Activated CD8-positive, alpha-beta T cell treated with anti-CD3 and anti-CD28 coated beads, Interleukin-2, amount 10 ng/mL, durations not matched to agents 7 days and 5 days (primary cell): ENCODE measurements at regions of chr6 and their contacts with region 1.

Region 1: DNA sequence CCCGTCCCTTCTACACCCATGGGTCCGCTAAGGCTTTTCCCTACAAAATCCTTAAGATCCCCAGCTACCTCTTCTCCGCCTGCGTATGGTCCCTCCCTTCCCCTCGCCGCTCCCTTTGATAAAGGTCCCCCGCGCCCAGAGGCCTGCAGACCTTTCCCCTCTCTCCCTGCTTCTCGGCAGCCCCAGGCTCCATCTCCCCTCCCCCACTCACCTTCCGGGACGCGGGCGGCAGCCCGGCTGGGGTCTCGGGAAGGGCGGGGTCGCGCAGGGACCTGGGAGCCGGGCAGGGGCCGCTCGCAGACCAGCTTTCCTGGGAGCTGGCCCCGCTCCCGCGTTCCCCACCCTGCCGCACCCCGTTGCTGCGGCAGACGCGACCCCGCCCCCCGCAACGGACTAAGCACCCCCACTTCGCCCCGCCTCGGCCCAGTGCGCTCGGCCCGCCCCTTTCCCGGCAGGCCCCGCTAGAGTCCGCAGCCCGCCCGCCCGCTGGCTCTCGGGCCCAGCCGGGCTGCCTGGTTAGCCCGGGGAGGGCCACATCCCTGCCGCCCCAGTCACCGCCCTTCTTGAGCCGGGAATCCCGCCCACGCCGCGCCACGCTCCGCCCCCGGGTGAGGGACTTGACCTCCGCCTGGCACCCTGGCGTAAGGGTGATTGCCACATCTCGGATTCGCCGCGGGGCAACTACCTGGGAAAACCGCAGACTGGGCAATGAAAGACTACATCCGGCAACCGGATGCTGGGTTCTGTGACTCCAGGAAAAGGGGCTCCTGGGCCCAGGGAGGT is at the start of gene FLOT1:
- DNase-seq: peak; percentile 98
- ATAC-seq: peak; percentile 78
- H3K4me3 Mint-ChIP-seq: peak within 1 kb of the TSS; percentile 99
- H3K27ac Mint-ChIP-seq: peak within 1 kb of the TSS; percentile 96
- H3K4me1 Mint-ChIP-seq: peaks cover 69% of the 10 kb centered on the region
- H3K27me3 Mint-ChIP-seq: no peaks in the 10 kb centered on the region
- total RNA-seq, gene FLOT1: 314 to 317 TPM

Region 2: GRCh38 chr6:30717042-30717844 is 25.3 kb before region 1 on chr6 and contains the start of gene MDC1:
- CTCF ChIA-PET with region 1: interaction called, 32 read pairs
- POLR2A ChIA-PET with region 1: interaction called, 4 read pairs
- DNase-seq: peak; percentile 100
- ATAC-seq: peak; percentile 81
- H3K4me3 Mint-ChIP-seq: peak within 1 kb of the TSS; percentile 98
- H3K27ac Mint-ChIP-seq: peak within 1 kb of the TSS; percentile 100
- H3K4me1 Mint-ChIP-seq: peaks cover 64% of the 10 kb centered on the region
- H3K27me3 Mint-ChIP-seq: no peaks in the 10 kb centered on the region
- total RNA-seq, gene MDC1: 48.5 to 52.4 TPM

Region 3: GRCh38 chr6:30754631-30755030 is 12.1 kb after region 1 on chr6:
- CTCF ChIA-PET with region 1: interaction called, 12 read pairs
- POLR2A ChIA-PET with region 1: interaction called, 3 read pairs
- DNase-seq: no peak
- ATAC-seq: no peak
- H3K4me3 Mint-ChIP-seq: no peak overlapping the region
- H3K27ac Mint-ChIP-seq: no peak overlapping the region
- H3K4me1 Mint-ChIP-seq: peaks cover 28% of the 10 kb centered on the region
- H3K27me3 Mint-ChIP-seq: no peaks in the 10 kb centered on the region

Region 4: DNA sequence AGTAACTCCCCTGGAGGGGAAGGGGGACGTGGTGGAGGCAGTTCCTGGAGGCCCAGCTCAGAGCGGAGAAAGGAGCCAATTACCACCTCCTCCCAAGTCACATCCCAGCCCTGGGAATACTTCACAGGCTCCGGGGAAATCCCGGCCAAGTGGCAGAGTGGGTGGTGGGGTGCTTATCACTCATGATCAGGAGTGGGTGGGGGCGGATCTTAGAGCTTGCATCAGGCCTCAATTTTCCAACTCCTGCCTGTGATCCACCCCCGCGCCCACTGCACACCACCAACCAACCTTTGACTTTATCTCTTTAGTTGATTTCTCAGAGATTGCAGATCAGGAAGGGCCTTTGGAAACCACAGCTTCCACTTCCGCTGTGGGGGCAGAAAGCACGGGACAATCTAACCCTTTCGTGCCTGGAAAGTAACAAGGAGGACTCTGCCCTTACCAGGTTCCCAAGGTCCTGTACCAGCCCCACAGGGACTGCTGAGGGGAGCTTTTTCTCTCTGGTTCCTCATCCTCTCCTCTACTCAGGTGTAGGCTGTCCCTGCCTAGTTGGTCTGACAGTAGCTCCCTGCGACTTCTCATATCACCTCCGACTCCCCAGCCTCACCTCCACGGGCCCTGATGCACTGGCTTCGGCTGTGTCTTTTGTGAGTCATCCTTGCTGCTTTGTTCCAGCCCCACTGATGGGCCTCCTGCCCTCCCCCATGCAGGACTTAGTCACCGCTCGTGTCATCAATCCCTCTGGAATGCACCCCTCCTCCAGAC is 26.8 kb after region 1 on chr6:
- CTCF ChIA-PET with region 1: interaction called, 8 read pairs
- POLR2A ChIA-PET with region 1: interaction called, 40 read pairs
- DNase-seq: peak; percentile 86
- ATAC-seq: peak; percentile 84
- H3K4me3 Mint-ChIP-seq: peak overlapping the region; percentile 56
- H3K27ac Mint-ChIP-seq: peak overlapping the region; percentile 88
- H3K4me1 Mint-ChIP-seq: peaks cover 88% of the 10 kb centered on the region
- H3K27me3 Mint-ChIP-seq: no peaks in the 10 kb centered on the region

Region 5: DNA sequence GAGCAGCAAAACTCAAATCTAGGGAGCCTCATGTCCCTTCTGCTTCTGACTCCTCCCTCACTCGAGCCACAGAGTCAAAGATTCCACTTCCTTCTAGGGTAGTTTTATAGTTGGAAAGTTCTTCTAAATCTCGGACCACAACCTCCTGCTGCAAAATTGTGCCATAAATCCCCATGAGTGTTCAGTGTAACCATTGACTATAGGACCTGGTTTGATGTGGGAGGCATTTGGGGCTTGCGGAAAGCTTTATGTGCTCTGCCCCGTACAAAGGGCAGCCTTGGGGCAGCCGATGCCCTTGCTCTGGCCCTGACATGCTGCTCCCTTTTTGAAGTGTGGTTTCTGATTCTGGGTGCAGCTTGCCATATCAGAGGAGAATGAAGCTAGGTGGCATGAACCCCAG is 45.4 kb after region 1 on chr6:
- CTCF ChIA-PET with region 1: interaction called, 9 read pairs
- POLR2A ChIA-PET with region 1: interaction called, 13 read pairs
- DNase-seq: peak; percentile 77
- ATAC-seq: peak; percentile 83
- H3K4me3 Mint-ChIP-seq: peak overlapping the region; percentile 53
- H3K27ac Mint-ChIP-seq: peak overlapping the region; percentile 90
- H3K4me1 Mint-ChIP-seq: peaks cover 76% of the 10 kb centered on the region
- H3K27me3 Mint-ChIP-seq: no peaks in the 10 kb centered on the region

Region 6: DNA sequence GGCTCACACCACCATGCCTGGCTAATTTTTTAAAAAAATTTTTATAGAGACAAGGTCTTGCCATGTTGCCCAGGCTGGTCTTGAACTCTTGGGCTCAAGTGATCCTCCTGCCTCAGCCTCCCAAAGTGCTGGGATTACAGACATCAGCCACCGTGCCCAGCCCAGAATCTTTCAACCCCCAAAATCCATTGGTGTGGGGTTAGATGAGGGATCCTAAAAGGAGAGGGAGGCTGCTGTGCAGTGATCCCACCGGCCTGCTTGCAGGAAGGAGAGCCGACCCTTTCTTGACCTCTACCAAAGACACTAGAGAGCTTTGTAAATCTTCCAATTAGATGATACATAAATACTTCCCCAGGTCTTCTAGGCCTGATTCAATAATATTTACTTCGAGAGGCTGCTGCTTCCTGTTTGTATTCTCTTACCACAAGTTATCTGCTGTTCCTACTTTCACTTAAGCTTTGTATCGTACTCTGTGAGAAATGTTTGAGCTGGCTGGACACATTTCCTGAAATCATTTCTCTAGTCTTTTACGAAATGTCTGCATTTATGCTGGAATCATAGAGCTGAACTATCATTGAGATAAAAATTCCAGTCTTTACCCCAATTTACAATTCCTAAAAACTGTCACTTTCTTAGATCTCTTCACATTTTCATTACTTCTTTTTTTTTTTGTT is 51.2 kb after region 1 on chr6:
- CTCF ChIA-PET with region 1: interaction called, 9 read pairs
- POLR2A ChIA-PET with region 1: interaction called, 13 read pairs
- DNase-seq: peak; percentile 42
- ATAC-seq: peak; percentile 80
- H3K4me3 Mint-ChIP-seq: peak overlapping the region; percentile 67
- H3K27ac Mint-ChIP-seq: peak overlapping the region; percentile 93
- H3K4me1 Mint-ChIP-seq: peaks cover 66% of the 10 kb centered on the region
- H3K27me3 Mint-ChIP-seq: no peaks in the 10 kb centered on the region

Region 7: GRCh38 chr6:30821862-30822782 is 79.6 kb after region 1 on chr6:
- CTCF ChIA-PET with region 1: interaction called, 13 read pairs
- POLR2A ChIA-PET with region 1: interaction called, 7 read pairs
- DNase-seq: no peak
- ATAC-seq: no peak
- H3K4me3 Mint-ChIP-seq: no peak overlapping the region
- H3K27ac Mint-ChIP-seq: peak overlapping the region; percentile 39
- H3K4me1 Mint-ChIP-seq: peaks cover 60% of the 10 kb centered on the region
- H3K27me3 Mint-ChIP-seq: no peaks in the 10 kb centered on the region